Activated CD8-positive, alpha-beta T cell treated with anti-CD3 and anti-CD28 coated beads for 36 hours (primary cell): ENCODE measurements at regions of chr20 and their contacts with region 1.

Region 1: GRCh38 chr20:63955827-63956663 is at the start of gene UCKL1:
- DNase-seq: peak; percentile 93
- ATAC-seq: peak; percentile 78
- H3K4me3 Mint-ChIP-seq: peak within 1 kb of the TSS; percentile 81
- H3K27ac Mint-ChIP-seq: peak within 1 kb of the TSS; percentile 93
- H3K4me1 Mint-ChIP-seq: peaks cover 31% of the 10 kb centered on the region
- H3K27me3 Mint-ChIP-seq: no peaks in the 10 kb centered on the region
- CTCF ChIP-seq: peak; percentile 19
- total RNA-seq, gene UCKL1: 31.5 to 32.6 TPM

Region 2: GRCh38 chr20:63846128-63846798 is 109.8 kb before region 1 on chr20:
- CTCF ChIA-PET with region 1: no interaction called
- POLR2A ChIA-PET with region 1: no interaction called
- intact Hi-C with region 1: no loop called
- DNase-seq: no peak
- ATAC-seq: no peak
- H3K4me3 Mint-ChIP-seq: no peak overlapping the region
- H3K27ac Mint-ChIP-seq: no peak overlapping the region
- H3K4me1 Mint-ChIP-seq: peaks cover 16% of the 10 kb centered on the region
- H3K27me3 Mint-ChIP-seq: peaks cover 41% of the 10 kb centered on the region
- CTCF ChIP-seq: no peak

Region 3: DNA sequence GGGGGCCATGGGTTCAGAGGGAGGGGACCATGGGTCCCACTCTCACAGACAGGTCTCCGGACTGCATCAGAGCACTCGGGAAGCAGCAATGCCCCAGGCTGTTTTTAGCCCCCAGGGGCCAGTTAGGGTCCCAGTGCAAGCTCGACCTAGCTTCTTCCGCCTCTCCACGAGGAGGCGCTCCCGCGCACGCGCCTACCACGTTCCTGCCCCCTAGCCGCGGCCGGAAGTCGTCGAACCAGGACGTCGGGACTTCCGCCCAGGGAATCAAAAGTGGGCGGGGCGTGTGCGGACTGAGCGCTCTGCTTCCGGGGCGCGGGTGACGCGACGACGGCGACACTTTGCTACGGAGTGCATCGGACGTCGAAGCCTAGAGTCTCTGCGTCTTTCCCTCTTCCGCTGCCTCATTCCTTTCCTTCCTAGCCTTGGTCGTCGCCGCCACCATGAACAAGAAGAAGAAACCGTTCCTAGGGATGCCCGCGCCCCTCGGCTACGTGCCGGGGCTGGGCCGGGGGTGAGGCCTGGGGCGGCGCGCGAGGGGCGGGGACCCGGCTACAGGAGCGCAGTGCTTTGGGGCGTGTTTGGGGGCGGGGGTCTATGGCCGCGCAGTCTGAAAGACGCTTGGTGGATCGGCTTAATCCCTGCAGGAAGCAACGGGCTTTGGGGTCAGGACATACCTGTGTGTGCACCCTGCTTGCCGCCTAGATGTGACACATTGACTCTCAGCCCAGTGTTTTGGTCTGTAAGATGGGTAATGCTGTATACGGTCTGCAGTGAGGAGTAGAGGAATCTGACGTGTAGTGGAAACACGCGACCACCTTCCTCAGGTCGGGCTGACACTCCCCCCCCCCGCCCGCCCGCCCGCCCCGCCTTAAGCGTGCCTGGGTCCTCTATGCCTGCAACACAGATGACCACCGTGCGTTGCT is 25.0 kb after region 1 on chr20 and contains the start of gene PRPF6:
- CTCF ChIA-PET with region 1: interaction called, 4 read pairs
- POLR2A ChIA-PET with region 1: interaction called, 10 read pairs
- intact Hi-C with region 1: no loop called
- DNase-seq: peak; percentile 96
- ATAC-seq: peak; percentile 55
- H3K4me3 Mint-ChIP-seq: peak within 1 kb of the TSS; percentile 87
- H3K27ac Mint-ChIP-seq: peak within 1 kb of the TSS; percentile 98
- H3K4me1 Mint-ChIP-seq: peaks cover 60% of the 10 kb centered on the region
- H3K27me3 Mint-ChIP-seq: no peaks in the 10 kb centered on the region
- CTCF ChIP-seq: peak; percentile 87
- total RNA-seq, gene PRPF6: 53.0 to 55.5 TPM

Region 4: DNA sequence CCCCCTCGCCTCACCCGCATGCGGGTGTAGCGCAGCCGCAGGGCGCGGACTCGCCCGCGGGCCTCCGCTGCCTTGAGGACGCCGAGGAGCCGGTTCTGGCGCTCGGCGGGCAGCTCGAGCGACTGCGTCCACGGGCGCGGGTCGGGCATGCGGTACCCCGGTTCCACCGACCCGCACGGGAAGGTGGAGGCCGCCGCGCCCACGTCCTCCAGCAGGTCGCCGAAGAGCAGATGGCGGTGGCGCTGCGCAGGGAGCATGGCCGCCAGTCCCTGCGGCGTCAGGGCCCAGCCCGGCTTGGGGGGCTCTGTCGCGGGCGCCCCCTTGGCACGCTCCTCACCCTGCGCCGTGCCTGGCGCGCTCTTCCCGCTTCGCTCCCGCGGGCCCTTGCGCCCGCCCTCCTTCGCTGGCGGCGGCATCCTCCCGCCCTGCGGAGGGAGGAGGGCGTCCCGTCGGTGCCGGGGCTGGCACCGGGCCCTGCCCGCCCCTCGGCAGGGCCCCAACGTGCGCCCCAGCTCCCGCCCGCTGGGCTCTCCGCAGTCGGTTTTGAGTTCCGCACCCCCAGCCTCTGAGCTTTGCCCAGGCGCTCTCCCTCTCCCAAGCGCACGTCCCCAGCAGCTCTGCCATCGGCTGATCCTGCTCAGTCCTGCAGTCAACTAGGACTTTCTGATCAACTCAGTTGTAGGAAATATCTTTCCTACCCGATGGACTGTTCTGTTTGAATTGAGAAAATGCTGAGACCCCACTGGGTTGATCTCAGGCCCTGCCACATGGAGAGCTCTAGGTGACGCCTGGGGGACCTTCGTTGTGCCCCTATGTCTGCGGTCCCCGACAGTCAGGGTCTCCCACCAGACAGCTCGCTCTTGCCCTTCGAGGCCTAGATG is 128.0 kb after region 1 on chr20 and contains the start of gene LKAAEAR1:
- CTCF ChIA-PET with region 1: no interaction called
- POLR2A ChIA-PET with region 1: no interaction called
- intact Hi-C with region 1: no loop called
- DNase-seq: no peak
- ATAC-seq: no peak
- H3K4me3 Mint-ChIP-seq: peak within 1 kb of the TSS; percentile 72
- H3K27ac Mint-ChIP-seq: no peak within 1 kb of the TSS
- H3K4me1 Mint-ChIP-seq: peaks cover 24% of the 10 kb centered on the region
- H3K27me3 Mint-ChIP-seq: peaks cover 6% of the 10 kb centered on the region
- CTCF ChIP-seq: peak; percentile 31
- total RNA-seq, gene LKAAEAR1: 0.43 TPM